SK-N-SH (cell line): ENCODE measurements at regions of chr3 and their contacts with region 1.

Region 1: GRCh38 chr3:168040607-168041208 is 55.0 kb downstream of the GOLIM4 start:
- DNase-seq: peak; percentile 36
- H3K4me3 ChIP-seq: no peak overlapping the region
- H3K27ac ChIP-seq: no peak overlapping the region
- H3K4me1 ChIP-seq: peaks cover 0 to 9% of the 10 kb centered on the region in 2 experiments; a peak in 2 of 4 replicates
- H3K27me3 ChIP-seq: no peaks in the 10 kb centered on the region
- CTCF ChIP-seq: peak; percentile 75
- EP300 ChIP-seq: no peak
- RAD21 ChIP-seq: peak; percentile 79

Region 2: DNA sequence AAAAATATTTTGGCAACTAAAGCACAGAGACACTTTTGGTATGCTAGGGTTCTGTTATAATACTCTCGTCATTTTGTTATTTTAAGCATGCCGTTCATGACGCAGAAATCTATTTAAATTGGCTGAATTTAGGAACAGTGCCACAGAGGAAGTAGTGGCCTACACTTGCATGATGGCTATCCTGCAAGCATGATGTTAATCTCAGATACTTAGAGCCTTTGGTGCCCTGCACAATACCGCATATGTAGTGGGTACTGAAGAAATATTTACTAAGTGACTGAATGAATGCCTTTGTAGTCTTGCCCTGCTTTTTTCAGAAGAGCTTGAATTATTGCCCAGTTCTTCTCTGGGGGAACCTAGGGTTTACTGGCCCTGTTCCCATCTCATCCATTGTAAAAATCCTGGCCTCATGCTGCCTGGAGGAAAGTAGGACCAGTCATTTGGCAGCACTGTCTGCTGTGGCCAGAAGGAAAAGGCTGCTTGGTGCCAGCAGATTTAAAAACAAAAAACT is 226.2 kb before region 1 on chr3:
- CTCF ChIA-PET with region 1: no interaction called
- POLR2A ChIA-PET with region 1: no interaction called
- DNase-seq: peak; percentile 21
- H3K4me3 ChIP-seq: no peak overlapping the region
- H3K27ac ChIP-seq: peak overlapping the region in 1 of 2 experiments; percentile 58; a peak in 3 of 4 replicates
- H3K4me1 ChIP-seq: peaks cover 0 to 12% of the 10 kb centered on the region in 2 experiments; a peak in 2 of 4 replicates
- H3K27me3 ChIP-seq: no peaks in the 10 kb centered on the region
- CTCF ChIP-seq: no peak
- EP300 ChIP-seq: no peak
- RAD21 ChIP-seq: no peak

Region 3: GRCh38 chr3:167928381-167928780 is 112.3 kb before region 1 on chr3:
- CTCF ChIA-PET with region 1: interaction called, 14 read pairs
- POLR2A ChIA-PET with region 1: no interaction called
- DNase-seq: no peak
- H3K4me3 ChIP-seq: no peak overlapping the region
- H3K27ac ChIP-seq: no peak overlapping the region
- H3K4me1 ChIP-seq: no peaks in the 10 kb centered on the region; a peak in 1 of 4 replicates
- H3K27me3 ChIP-seq: no peaks in the 10 kb centered on the region
- CTCF ChIP-seq: no peak
- EP300 ChIP-seq: no peak
- RAD21 ChIP-seq: no peak

Region 4: DNA sequence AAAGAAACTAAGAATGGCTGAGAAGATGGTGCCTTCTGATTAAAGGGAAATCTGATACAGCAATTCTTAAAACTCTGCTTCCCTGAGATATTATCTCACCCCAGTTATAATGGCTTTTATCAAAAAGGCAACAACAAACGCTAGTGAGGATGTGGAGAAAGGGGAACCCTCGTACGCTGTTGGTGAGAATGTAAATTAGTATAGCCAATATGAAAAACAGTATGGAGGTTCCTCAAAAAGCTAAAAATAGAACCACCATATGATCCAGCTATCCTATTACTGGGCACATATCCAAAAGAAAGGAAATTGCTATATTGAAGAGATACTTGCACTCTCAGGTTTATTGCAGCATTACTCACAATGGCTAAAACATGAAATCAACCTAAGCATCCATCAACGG is 10.1 kb before region 1 on chr3:
- CTCF ChIA-PET with region 1: interaction called, 24 read pairs
- POLR2A ChIA-PET with region 1: no interaction called
- DNase-seq: no peak
- H3K4me3 ChIP-seq: no peak overlapping the region
- H3K27ac ChIP-seq: peak overlapping the region in 1 of 2 experiments; percentile 2; a peak in 1 of 4 replicates
- H3K4me1 ChIP-seq: peaks cover 0 to 15% of the 10 kb centered on the region in 2 experiments; a peak in 2 of 4 replicates
- H3K27me3 ChIP-seq: no peaks in the 10 kb centered on the region
- CTCF ChIP-seq: no peak
- EP300 ChIP-seq: peak in 1 of 2 experiments; percentile 52; a peak in 1 of 4 replicates
- RAD21 ChIP-seq: no peak

Region 5: DNA sequence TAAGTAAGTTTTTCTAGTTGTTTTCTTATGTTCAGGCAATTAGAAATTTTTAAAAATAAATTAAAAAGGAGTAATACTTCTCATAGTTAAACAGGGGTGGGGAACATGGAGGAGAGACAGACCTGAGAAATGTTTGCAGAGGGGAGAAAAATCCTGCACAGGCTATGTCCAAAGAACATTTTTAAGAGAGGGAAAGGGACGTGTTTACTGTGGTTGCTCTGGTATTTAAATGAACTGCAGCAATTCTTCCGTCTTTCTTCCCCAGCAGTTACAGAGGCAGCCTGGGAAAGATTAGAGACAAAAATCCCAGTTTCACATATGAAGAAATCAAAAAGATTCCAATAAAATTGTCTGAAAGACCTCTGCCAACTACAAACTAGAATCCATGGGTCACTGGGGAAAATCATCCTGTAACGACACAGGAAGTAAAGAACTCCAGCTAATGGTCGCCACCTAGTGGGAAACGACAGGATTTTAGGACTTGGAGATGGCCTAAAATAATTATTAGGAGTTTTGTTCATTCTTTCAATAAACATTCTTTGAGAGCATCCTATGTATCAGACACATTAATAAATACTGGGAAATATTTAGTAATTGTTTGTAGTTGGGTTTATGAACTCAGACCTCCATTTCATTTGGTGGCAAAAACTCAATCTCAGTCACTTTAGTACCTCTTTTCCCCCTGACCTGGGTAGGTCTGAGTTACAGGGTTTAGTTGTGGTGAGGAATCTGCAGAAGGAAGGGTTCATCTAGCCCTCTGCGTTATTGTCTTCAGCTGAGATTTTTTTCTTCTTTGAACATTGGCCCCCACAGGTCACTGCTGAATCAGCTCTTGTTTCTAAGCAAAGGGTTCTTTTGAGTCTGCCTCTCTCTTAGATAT is 124.9 kb after region 1 on chr3:
- CTCF ChIA-PET with region 1: interaction called, 78 read pairs
- POLR2A ChIA-PET with region 1: no interaction called
- DNase-seq: peak; percentile 64
- H3K4me3 ChIP-seq: no peak overlapping the region; a peak in 1 of 4 replicates
- H3K27ac ChIP-seq: no peak overlapping the region
- H3K4me1 ChIP-seq: no peaks in the 10 kb centered on the region
- H3K27me3 ChIP-seq: no peaks in the 10 kb centered on the region
- CTCF ChIP-seq: peak; percentile 87
- EP300 ChIP-seq: no peak
- RAD21 ChIP-seq: peak; percentile 96

Region 6: GRCh38 chr3:168220556-168220955 is 179.8 kb after region 1 on chr3:
- CTCF ChIA-PET with region 1: no interaction called
- POLR2A ChIA-PET with region 1: no interaction called
- DNase-seq: no peak
- H3K4me3 ChIP-seq: no peak overlapping the region
- H3K27ac ChIP-seq: no peak overlapping the region
- H3K4me1 ChIP-seq: peaks cover 0 to 2% of the 10 kb centered on the region in 2 experiments; a peak in 1 of 4 replicates
- H3K27me3 ChIP-seq: no peaks in the 10 kb centered on the region
- CTCF ChIP-seq: no peak
- EP300 ChIP-seq: no peak
- RAD21 ChIP-seq: no peak

Region 7: DNA sequence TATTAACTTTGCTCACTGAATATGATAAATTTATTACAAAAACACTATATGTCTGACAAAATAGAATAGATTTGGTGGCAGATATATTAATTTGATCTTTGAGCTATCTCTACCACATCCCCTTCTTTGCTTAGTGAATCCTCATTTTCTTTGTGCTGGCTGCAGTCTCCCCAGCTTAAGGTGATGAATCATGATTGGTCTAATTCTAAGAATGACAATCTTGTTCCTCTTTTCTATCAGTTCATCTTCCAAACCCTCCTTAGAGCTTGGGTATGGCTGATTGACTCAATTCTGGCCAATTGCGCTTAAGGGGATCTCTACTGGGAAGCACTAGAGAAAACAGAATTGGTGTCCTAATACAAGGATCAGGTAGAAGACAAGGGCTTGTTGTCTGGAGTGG is 364.6 kb after region 1 on chr3:
- CTCF ChIA-PET with region 1: no interaction called
- POLR2A ChIA-PET with region 1: no interaction called
- DNase-seq: no peak
- H3K4me3 ChIP-seq: no peak overlapping the region
- H3K27ac ChIP-seq: no peak overlapping the region
- H3K4me1 ChIP-seq: no peaks in the 10 kb centered on the region
- H3K27me3 ChIP-seq: no peaks in the 10 kb centered on the region
- CTCF ChIP-seq: no peak
- EP300 ChIP-seq: no peak
- RAD21 ChIP-seq: no peak